ENCODE measurements at regions of chr14 and their contacts with region 1.

Region 1: DNA sequence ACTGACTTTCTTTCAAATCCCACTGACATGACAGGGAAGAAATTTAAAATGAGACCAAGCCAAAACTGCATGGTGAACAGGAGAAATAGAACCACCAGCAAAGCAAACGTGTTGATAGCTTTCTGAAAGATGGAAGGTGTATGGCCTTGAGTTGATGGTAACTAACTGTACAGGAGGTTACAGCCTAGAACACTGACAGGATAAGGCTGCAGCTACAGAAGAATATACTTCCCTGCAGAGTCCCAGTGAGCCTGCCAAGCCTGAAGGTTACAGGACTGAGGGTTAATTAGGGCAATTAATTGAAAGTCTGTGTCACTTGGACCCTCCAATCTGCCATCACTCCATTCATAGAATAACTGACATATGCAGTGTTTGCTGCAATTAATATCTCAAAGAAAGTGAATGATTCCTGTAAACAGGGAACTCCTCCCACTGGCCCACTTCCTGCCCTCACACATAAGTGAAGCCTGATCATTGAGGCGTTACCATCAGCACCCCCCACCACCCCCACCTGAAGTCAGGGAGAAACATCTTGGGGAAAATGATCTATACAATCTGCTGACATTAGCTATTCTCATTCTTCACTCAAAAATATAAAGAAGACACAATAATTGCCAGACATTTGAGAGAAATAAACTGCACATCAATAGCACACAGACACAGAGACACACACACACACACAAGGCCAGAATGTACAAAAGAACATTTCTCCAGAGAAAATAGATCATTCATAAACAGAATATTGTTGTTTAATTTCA is 73.4 kb downstream of the GTF2A1 start:
- DNase-seq: no peak
- ATAC-seq: no peak
- H3K4me3 ChIP-seq: no peak overlapping the region
- H3K27ac ChIP-seq: no peak overlapping the region
- H3K4me1 ChIP-seq: peaks cover 0 to 3% of the 10 kb centered on the region in 2 donors
- H3K27me3 ChIP-seq: no peaks in the 10 kb centered on the region
- CTCF ChIP-seq: no peak
- POLR2A ChIP-seq: no peak

Region 2: DNA sequence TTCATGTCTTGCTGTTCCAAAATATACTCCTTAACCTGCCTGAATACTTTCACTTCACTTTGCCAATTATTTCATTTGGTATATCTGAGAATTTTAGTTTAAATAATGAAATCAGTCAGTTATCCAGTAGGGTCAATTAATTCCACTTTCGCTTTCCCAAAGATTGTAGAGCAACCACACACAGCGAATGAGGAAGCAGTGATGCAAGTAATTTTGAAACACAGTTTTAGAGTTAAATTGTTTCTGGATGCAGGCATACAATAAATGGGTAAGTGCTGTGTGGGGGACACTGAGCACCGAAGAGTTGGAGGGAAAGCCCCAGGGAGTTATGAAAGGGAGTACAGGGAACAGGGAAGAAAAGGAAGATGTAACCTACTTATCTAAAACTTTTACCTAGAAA is 129.1 kb before region 1 on chr14:
- in situ Hi-C with region 1: no loop called
- intact Hi-C with region 1: loop called (anchors 10 kb)
- DNase-seq: no peak
- ATAC-seq: no peak
- H3K4me3 ChIP-seq: no peak overlapping the region
- H3K27ac ChIP-seq: no peak overlapping the region
- H3K4me1 ChIP-seq: no peaks in the 10 kb centered on the region
- H3K27me3 ChIP-seq: no peaks in the 10 kb centered on the region
- CTCF ChIP-seq: no peak
- POLR2A ChIP-seq: no peak